Activated CD4-positive, alpha-beta T cell treated with anti-CD3 and anti-CD28 coated beads for 36 hours (primary cell): ENCODE measurements at regions of chr17 and their contacts with region 1.

Region 1: DNA sequence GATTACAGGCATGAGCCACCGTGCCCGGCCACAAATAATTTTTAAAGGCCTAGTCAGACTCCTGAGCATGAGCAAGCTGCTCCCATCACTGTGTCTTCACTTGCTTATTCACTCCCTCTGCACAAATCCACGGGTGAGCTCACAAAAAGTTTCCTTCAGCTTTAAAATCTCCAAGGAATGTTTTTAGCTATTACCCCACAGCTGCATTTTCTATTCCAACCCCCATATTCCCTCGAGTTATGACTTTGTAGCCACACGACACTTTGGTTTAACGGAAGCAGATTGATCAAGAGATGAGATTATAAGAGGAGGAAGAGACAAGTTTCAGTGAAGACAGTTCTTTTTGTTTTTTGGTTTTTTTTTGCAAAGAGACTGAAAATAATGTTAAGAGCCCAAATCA is 49.1 kb upstream of the SLC25A19 start:
- DNase-seq: peak; percentile 38
- ATAC-seq: peak; percentile 33
- H3K4me3 Mint-ChIP-seq: peak overlapping the region; percentile 65
- H3K27ac Mint-ChIP-seq: peak overlapping the region; percentile 96
- H3K4me1 Mint-ChIP-seq: peaks cover 82% of the 10 kb centered on the region
- H3K27me3 Mint-ChIP-seq: no peaks in the 10 kb centered on the region

Region 2: GRCh38 chr17:75371339-75371738 is 33.0 kb after region 1 on chr17:
- CTCF ChIA-PET with region 1: interaction called, 6 read pairs
- POLR2A ChIA-PET with region 1: interaction called, 3 read pairs
- intact Hi-C with region 1: loop called in 1 of 2 experiments (anchors 5 kb)
- DNase-seq: no peak
- ATAC-seq: peak; percentile 24
- H3K4me3 Mint-ChIP-seq: peak overlapping the region; percentile 56
- H3K27ac Mint-ChIP-seq: peak overlapping the region; percentile 82
- H3K4me1 Mint-ChIP-seq: peaks cover 78% of the 10 kb centered on the region
- H3K27me3 Mint-ChIP-seq: no peaks in the 10 kb centered on the region

Region 3: DNA sequence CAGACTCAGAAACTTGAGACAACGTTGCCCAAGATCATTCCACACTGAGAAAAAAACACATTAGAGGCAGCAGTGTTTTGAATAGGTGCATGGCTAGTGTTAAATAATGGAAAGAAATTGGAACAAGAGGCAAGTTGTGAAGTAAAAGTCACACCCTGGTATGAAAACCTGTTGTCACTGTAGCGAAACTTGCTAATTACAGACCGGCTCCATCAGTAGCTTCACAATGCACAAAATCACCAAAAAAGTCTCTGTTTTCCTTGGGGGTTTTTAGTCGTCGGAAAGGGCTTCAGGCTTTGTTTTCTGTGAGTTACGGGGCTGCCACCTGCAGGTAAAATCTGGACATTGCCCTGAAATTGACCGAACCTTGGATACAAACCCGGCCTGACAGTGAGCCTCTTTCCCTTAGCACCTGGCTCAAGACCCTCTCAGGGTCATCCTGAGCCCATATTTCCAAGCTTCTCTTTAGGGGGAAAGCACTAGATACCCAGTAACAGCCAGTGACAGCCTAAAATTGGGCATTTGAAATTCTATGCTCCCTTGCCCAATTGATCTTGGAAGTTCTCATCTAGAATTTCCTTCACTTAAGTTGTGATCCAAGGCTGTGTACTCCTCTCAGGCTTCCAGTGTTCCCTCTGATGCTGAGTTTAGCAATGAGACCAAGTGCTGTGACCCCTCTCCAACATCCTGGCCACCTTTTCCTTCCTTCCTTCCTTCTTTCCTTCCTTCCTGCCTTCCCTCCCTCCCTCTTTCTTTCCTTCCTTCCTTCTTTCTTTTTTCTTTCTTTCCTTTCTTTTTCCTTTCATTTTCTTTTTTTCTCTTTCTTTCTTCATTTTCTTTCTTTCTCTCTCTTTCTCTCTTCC is 74.4 kb after region 1 on chr17:
- CTCF ChIA-PET with region 1: interaction called, 11 read pairs
- POLR2A ChIA-PET with region 1: no interaction called
- intact Hi-C with region 1: no loop called
- DNase-seq: peak; percentile 84
- ATAC-seq: peak; percentile 85
- H3K4me3 Mint-ChIP-seq: peak overlapping the region; percentile 44
- H3K27ac Mint-ChIP-seq: peak overlapping the region; percentile 3
- H3K4me1 Mint-ChIP-seq: peaks cover 15% of the 10 kb centered on the region
- H3K27me3 Mint-ChIP-seq: no peaks in the 10 kb centered on the region